GM13976 (cell line): ENCODE measurements at regions of chr19 and their contacts with region 1.

Region 1: GRCh38 chr19:41945135-41945766 is 13.9 kb downstream of the RABAC1 start:
- DNase-seq: peak; percentile 88
- CTCF ChIP-seq: no peak

Region 2: GRCh38 chr19:41859618-41860418 is 85.4 kb before region 1 on chr19 and contains the start of gene RPS19:
- in situ Hi-C with region 1: loop called (anchors 5 kb)
- DNase-seq: peak; percentile 97
- CTCF ChIP-seq: no peak

Region 3: GRCh38 chr19:41883821-41884733 is 61.2 kb before region 1 on chr19:
- in situ Hi-C with region 1: loop called (anchors 10 kb)
- DNase-seq: peak; percentile 96
- CTCF ChIP-seq: no peak